HCT116 (cell line): ENCODE measurements at regions of chr2 and their contacts with region 1.

Region 1: GRCh38 chr2:207746131-207746530 is 23.6 kb downstream of the FZD5 start:
- DNase-seq: peak; percentile 54
- ATAC-seq: peak; percentile 97
- H3K4me3 ChIP-seq: no peak overlapping the region
- H3K27ac ChIP-seq: no peak overlapping the region
- H3K4me1 ChIP-seq: no peaks in the 10 kb centered on the region
- H3K27me3 ChIP-seq: no peaks in the 10 kb centered on the region
- CTCF ChIP-seq: peak; percentile 89 to 98 (median 95)
- POLR2A ChIP-seq: no peak
- RAD21 ChIP-seq: peak; percentile 99

Region 2: GRCh38 chr2:207974216-207974605 is 228.1 kb after region 1 on chr2:
- CTCF ChIA-PET with region 1: interaction called, 9 read pairs
- POLR2A ChIA-PET with region 1: no interaction called
- RAD21 ChIA-PET with region 1: interaction called, 3 read pairs
- intact Hi-C with region 1: loop called (anchors 1 kb)
- DNase-seq: no peak
- ATAC-seq: no peak
- H3K4me3 ChIP-seq: no peak overlapping the region
- H3K27ac ChIP-seq: no peak overlapping the region
- H3K4me1 ChIP-seq: no peaks in the 10 kb centered on the region
- H3K27me3 ChIP-seq: no peaks in the 10 kb centered on the region
- CTCF ChIP-seq: no peak
- POLR2A ChIP-seq: no peak
- RAD21 ChIP-seq: no peak

Region 3: DNA sequence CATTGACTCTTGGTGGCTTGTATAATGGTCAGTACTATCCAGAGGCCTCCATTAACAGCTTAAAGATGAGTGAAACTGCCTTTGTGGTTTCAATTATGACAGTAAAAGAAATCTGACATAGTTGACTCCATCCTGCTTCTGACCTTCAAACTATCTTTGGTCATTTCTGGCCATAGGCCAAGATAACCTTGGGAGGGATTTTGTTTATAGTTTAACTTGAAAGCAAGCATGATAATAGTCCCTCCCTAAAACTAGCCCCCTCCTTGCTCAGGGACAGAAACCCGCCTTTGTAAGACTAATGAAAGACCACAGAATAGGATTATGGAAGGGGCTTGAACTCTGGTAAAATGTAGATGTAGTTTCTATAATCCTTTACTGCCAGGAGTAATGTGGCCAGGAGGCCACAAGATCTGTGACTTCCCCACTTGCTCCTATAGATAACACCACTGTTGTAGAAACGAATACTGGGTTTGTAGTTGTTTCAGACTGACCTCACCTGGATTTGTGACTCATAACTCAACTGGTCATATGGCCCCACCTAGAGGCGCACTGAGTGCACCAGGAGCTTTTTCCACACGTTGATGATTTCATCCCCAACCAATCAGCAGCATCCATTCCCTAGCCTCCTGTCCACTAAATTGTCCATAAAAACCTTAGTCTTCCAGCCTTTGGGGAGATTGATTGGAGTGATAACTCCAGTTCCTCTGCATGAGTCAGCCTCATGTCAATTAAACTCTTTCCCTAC is 287.8 kb after region 1 on chr2:
- CTCF ChIA-PET with region 1: interaction called, 15 read pairs
- POLR2A ChIA-PET with region 1: no interaction called
- RAD21 ChIA-PET with region 1: interaction called in 1 of 2 experiments, 5 read pairs
- intact Hi-C with region 1: loop called (anchors 1 kb)
- DNase-seq: peak; percentile 68
- ATAC-seq: peak; percentile 92
- H3K4me3 ChIP-seq: no peak overlapping the region
- H3K27ac ChIP-seq: no peak overlapping the region
- H3K4me1 ChIP-seq: peaks cover 0 to 7% of the 10 kb centered on the region in 2 experiments; a peak in 2 of 4 replicates
- H3K27me3 ChIP-seq: no peaks in the 10 kb centered on the region
- CTCF ChIP-seq: peak; percentile 40 to 75 (median 54); a peak in 5 of 6 replicates
- POLR2A ChIP-seq: no peak
- RAD21 ChIP-seq: peak; percentile 87

Region 4: GRCh38 chr2:208040199-208041171 is 294.4 kb after region 1 on chr2:
- CTCF ChIA-PET with region 1: interaction called, 66 read pairs
- POLR2A ChIA-PET with region 1: no interaction called
- RAD21 ChIA-PET with region 1: interaction called in 1 of 2 experiments, 11 read pairs
- intact Hi-C with region 1: loop called (anchors 1 kb)
- DNase-seq: peak; percentile 70
- ATAC-seq: peak; percentile 92
- H3K4me3 ChIP-seq: no peak overlapping the region
- H3K27ac ChIP-seq: no peak overlapping the region
- H3K4me1 ChIP-seq: peaks cover 0 to 4% of the 10 kb centered on the region in 2 experiments; a peak in 1 of 4 replicates
- H3K27me3 ChIP-seq: no peaks in the 10 kb centered on the region
- CTCF ChIP-seq: peak; percentile 72 to 91 (median 84)
- POLR2A ChIP-seq: no peak
- RAD21 ChIP-seq: peak; percentile 74

Region 5: DNA sequence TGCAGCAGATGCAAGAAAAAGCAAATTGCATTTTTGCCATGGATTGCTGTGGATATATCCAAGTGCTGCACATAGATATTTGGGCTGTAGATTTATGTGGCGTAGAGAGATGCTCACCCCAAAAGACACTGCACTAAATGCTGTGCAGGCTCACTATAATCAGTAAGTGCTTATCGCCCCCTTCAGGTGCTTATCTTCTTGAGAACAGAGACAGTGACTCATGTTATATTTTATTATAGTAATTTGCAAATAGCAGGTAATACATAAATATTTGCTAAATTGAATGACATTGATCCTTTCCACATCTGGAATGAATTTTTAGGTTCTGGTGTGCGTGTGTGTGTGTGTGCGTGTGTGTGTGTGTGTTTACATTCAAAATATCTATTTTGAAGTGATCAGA is 316.0 kb after region 1 on chr2:
- CTCF ChIA-PET with region 1: no interaction called
- POLR2A ChIA-PET with region 1: no interaction called
- RAD21 ChIA-PET with region 1: interaction called in 1 of 2 experiments, 3 read pairs
- intact Hi-C with region 1: loop called (anchors 1 kb)
- DNase-seq: peak; percentile 26
- ATAC-seq: peak; percentile 86
- H3K4me3 ChIP-seq: no peak overlapping the region
- H3K27ac ChIP-seq: no peak overlapping the region
- H3K4me1 ChIP-seq: peaks cover 0 to 6% of the 10 kb centered on the region in 2 experiments; a peak in 2 of 4 replicates
- H3K27me3 ChIP-seq: no peaks in the 10 kb centered on the region
- CTCF ChIP-seq: peak; percentile 48 to 64 (median 61); a peak in 5 of 6 replicates
- POLR2A ChIP-seq: no peak
- RAD21 ChIP-seq: peak; percentile 73

Region 6: DNA sequence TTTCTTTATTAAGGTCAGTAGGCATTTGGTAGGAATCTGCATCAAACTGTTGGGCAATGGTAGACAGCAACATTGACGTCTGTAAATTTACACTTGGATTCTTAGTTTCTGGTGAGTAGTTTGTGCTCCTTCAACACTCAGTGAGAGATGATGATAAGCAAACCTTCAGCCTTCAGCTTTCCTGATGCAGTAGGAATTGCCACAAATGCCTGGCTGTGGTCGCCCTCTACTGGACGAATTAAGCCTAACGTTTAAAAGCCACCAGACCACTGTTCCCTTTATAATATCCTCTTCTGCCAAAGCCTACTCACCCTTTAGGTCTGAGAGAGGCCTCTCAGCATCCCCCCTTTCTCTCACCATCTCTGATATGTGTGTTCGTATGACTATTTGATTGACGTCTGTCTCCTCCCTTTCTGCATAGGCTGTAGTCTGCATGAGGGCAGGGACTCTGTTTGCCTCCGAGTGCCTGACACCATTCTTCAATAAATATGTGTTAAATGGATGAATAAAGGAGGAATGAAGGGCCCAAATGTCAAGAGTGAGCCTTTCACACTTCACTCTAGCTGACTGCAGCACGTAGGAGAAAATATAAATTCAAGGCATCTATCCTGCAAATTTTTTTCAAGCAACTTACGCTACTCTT is 326.2 kb after region 1 on chr2:
- CTCF ChIA-PET with region 1: interaction called, 15 read pairs
- POLR2A ChIA-PET with region 1: no interaction called
- RAD21 ChIA-PET with region 1: no interaction called
- intact Hi-C with region 1: loop called (anchors 1 kb)
- DNase-seq: peak; percentile 57
- ATAC-seq: peak; percentile 98
- H3K4me3 ChIP-seq: no peak overlapping the region
- H3K27ac ChIP-seq: no peak overlapping the region
- H3K4me1 ChIP-seq: no peaks in the 10 kb centered on the region
- H3K27me3 ChIP-seq: no peaks in the 10 kb centered on the region
- CTCF ChIP-seq: peak; percentile 38 to 86 (median 62); a peak in 5 of 6 replicates
- POLR2A ChIP-seq: no peak
- RAD21 ChIP-seq: peak; percentile 87

Region 7: GRCh38 chr2:208254871-208255556 is 508.9 kb after region 1 on chr2 and contains the start of gene IDH1:
- CTCF ChIA-PET with region 1: interaction called, 10 read pairs
- POLR2A ChIA-PET with region 1: no interaction called
- RAD21 ChIA-PET with region 1: no interaction called
- intact Hi-C with region 1: loop called (anchors 5 kb)
- DNase-seq: peak; percentile 87
- ATAC-seq: peak; percentile 79
- H3K4me3 ChIP-seq: peak within 1 kb of the TSS; percentile 79 to 80
- H3K27ac ChIP-seq: peak within 1 kb of the TSS; percentile 73
- H3K4me1 ChIP-seq: peaks cover 10 to 20% of the 10 kb centered on the region in 2 experiments; a peak in 3 of 4 replicates
- H3K27me3 ChIP-seq: no peaks in the 10 kb centered on the region
- CTCF ChIP-seq: peak; percentile 60 to 64 (median 62); a peak in 5 of 6 replicates
- POLR2A ChIP-seq: no peak
- RAD21 ChIP-seq: peak; percentile 61
- total RNA-seq, gene IDH1: 91.2 TPM